ENCODE measurements at regions of chr5 and their contacts with region 1.

Region 1: GRCh38 chr5:75519761-75520160 is 8.1 kb downstream of the POLK start:
- DNase-seq: no peak
- H3K4me3 ChIP-seq: no peak overlapping the region
- H3K27ac ChIP-seq: no peak overlapping the region
- H3K4me1 ChIP-seq: no peaks in the 10 kb centered on the region
- H3K27me3 ChIP-seq: no peaks in the 10 kb centered on the region
- CTCF ChIP-seq: no peak
- EP300 ChIP-seq: no peak
- POLR2A ChIP-seq: no peak

Region 2: GRCh38 chr5:75545131-75545530 is 25.4 kb after region 1 on chr5:
- intact Hi-C with region 1: loop called in 1 of 4 experiments (anchors 2 kb)
- DNase-seq: no peak
- H3K4me3 ChIP-seq: no peak overlapping the region
- H3K27ac ChIP-seq: no peak overlapping the region
- H3K4me1 ChIP-seq: no peaks in the 10 kb centered on the region
- H3K27me3 ChIP-seq: no peaks in the 10 kb centered on the region
- CTCF ChIP-seq: no peak
- EP300 ChIP-seq: no peak
- POLR2A ChIP-seq: no peak

Region 3: DNA sequence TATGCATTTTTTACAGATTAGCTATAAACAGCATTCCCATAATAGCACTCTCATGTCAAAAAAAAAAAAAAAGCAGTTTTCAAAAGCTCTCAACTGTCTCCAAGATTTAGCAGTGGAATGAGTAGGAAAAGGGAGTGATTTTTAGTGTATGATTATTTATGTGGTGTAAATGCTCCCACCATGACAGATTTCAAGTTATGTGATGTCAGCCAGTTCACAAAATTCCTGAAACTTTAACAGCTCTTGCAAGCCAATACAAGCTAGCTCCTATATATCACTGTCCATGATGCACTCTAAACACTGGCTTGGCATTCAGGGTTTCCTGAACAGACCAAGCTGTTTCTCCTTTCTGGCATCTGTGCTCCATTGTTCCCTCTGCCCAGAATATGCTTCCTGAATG is 83.6 kb after region 1 on chr5:
- intact Hi-C with region 1: no loop called
- DNase-seq: no peak
- H3K4me3 ChIP-seq: no peak overlapping the region
- H3K27ac ChIP-seq: no peak overlapping the region
- H3K4me1 ChIP-seq: no peaks in the 10 kb centered on the region
- H3K27me3 ChIP-seq: no peaks in the 10 kb centered on the region
- CTCF ChIP-seq: no peak
- EP300 ChIP-seq: no peak
- POLR2A ChIP-seq: no peak

Region 4: GRCh38 chr5:76634661-76635060 is 1114.9 kb after region 1 on chr5:
- intact Hi-C with region 1: no loop called
- DNase-seq: no peak
- H3K4me3 ChIP-seq: no peak overlapping the region
- H3K27ac ChIP-seq: no peak overlapping the region
- H3K4me1 ChIP-seq: no peaks in the 10 kb centered on the region
- H3K27me3 ChIP-seq: no peaks in the 10 kb centered on the region
- CTCF ChIP-seq: no peak
- EP300 ChIP-seq: no peak
- POLR2A ChIP-seq: no peak